ENCODE measurements at regions of chr13 and their contacts with region 1.

Region 1: GRCh38 chr13:22091222-22091970 is 420.5 kb downstream of the FGF9 start:
- DNase-seq: peak; percentile 79
- ATAC-seq: peak; percentile 64
- H3K4me3 ChIP-seq: no peak overlapping the region
- H3K27ac ChIP-seq: peak overlapping the region; percentile 80; the same call in 1 of the 2 replicates
- H3K4me1 ChIP-seq: peaks cover 23% of the 10 kb centered on the region
- H3K27me3 ChIP-seq: peaks cover 2% of the 10 kb centered on the region
- CTCF ChIP-seq: no peak
- POLR2A ChIP-seq: no peak
- RAD21 ChIP-seq: no peak

Region 2: GRCh38 chr13:22173610-22174009 is 82.2 kb after region 1 on chr13:
- CTCF ChIA-PET with region 1: no interaction called
- POLR2A ChIA-PET with region 1: no interaction called
- dilution Hi-C with region 1: no loop called
- in situ Hi-C with region 1: no loop called
- intact Hi-C with region 1: loop called (anchors 5 kb)
- DNase-seq: peak; percentile 90
- ATAC-seq: peak; percentile 96
- H3K4me3 ChIP-seq: no peak overlapping the region
- H3K27ac ChIP-seq: no peak overlapping the region; the same call in 1 of the 2 replicates
- H3K4me1 ChIP-seq: peaks cover 5% of the 10 kb centered on the region
- H3K27me3 ChIP-seq: no peaks in the 10 kb centered on the region
- CTCF ChIP-seq: no peak
- POLR2A ChIP-seq: no peak
- RAD21 ChIP-seq: no peak

Measured in IMR-90 (cell line).